Mammary epithelial cell (primary cell): ENCODE measurements at regions of chr20 and their contacts with region 1.

Region 1: DNA sequence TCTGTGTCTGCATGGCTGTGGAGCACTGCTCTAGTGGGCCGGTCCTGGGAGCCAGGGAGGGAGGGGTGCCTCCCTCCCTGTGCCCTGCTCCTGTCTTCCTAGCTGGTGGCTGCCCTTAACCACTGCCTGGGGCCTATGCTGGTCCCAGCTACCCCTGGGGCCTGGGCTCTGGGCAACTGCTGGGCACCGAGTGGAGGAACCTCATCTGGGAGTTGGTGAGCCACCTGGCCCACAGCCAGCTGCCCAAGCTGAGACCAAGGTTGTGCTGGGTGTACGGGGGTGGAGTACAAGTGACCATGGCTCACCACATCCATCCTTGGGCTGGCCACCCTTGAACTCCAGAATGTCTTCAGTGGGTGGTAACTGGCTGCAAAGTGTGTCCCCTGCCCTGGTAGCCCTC is 156.8 kb downstream of the PHACTR3 start:
- DNase-seq: no peak
- H3K4me3 ChIP-seq: no peak overlapping the region
- H3K27ac ChIP-seq: no peak overlapping the region
- H3K4me1 ChIP-seq: no peaks in the 10 kb centered on the region
- H3K27me3 ChIP-seq: peaks cover 2% of the 10 kb centered on the region
- CTCF ChIP-seq: no peak

Region 2: DNA sequence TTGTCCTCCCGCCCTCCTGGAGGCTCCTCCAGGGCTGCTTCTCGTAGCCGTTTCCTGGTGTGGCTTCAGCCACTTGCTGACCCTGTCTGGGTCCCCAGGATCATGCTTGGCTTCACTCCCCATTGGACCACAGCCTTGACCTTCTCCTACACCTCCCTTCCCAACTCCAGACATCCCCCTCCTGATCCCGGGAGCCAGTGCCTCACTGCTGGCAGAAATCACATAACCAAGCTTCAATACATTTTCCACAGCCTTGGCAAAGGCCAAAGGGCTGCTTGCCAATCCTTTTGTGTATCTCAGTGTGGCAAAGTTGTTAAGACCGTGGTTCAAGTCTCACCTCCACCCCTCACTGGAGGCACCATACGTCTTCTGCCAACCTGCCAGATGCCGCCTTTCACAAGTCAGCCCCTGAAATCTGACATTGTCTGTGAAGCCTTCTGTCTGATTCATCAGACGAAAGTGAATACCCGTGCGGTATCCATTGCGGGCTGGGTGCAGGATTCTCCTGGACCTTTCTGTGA is 96.7 kb before region 1 on chr20:
- CTCF ChIA-PET with region 1: no interaction called
- dilution Hi-C with region 1: loop called (anchors 5 kb)
- in situ Hi-C with region 1: no loop called
- intact Hi-C with region 1: no loop called
- DNase-seq: no peak
- H3K4me3 ChIP-seq: no peak overlapping the region
- H3K27ac ChIP-seq: no peak overlapping the region
- H3K4me1 ChIP-seq: no peaks in the 10 kb centered on the region
- H3K27me3 ChIP-seq: no peaks in the 10 kb centered on the region
- CTCF ChIP-seq: no peak

Region 3: DNA sequence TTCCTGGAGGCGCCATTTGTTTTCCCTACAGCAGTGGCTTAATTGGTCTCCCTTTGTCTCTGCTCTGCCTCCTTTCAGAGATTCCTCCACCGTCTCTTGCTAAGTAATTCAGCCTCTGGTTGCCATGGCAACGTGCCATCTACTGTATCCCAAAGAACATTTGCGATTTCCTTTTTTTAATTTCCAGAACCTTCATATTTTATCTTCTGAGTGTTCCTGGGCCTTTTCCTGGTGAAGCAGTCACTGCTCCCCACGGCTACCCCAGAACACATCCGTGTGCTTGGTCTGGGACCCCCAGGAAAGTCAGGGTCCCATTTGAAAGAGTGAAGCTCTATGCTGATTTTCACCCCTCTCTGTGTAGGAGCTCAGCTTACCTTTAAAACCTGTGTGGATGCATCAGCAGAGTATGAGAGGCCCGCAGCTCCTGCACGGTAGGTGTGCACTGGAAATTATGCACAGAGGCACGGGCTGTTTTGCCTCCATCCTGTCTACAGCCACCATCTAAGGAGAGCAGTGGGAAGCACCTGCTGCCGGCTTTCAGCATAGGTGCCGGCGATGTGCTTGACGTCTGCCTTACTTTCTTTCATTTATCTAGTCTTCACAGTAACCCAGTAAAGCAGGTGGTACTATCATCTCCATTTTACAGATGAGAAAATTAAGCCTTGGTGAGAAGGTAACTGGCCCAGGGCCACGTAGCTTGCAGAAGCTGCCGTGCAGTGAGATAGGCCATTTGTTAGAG is 49.5 kb after region 1 on chr20:
- CTCF ChIA-PET with region 1: no interaction called
- dilution Hi-C with region 1: no loop called
- in situ Hi-C with region 1: no loop called
- intact Hi-C with region 1: no loop called
- DNase-seq: no peak
- H3K4me3 ChIP-seq: no peak overlapping the region
- H3K27ac ChIP-seq: no peak overlapping the region
- H3K4me1 ChIP-seq: no peaks in the 10 kb centered on the region
- H3K27me3 ChIP-seq: peaks cover 3% of the 10 kb centered on the region
- CTCF ChIP-seq: no peak